GM23248 (cell line): ENCODE measurements at regions of chr15 and their contacts with region 1.

Region 1: GRCh38 chr15:79896637-79897379 is at the start of gene MTHFS:
- DNase-seq: peak; percentile 87
- H3K4me3 ChIP-seq: peak within 1 kb of the TSS; percentile 71
- H3K27ac ChIP-seq: peak within 1 kb of the TSS; percentile 63
- H3K4me1 ChIP-seq: peaks cover 21% of the 10 kb centered on the region
- H3K27me3 ChIP-seq: no peaks in the 10 kb centered on the region
- total RNA-seq, gene MTHFS: 17.4 and 29.1 TPM in 2 replicates

Region 2: GRCh38 chr15:79978655-79979514 is 82.1 kb after region 1 on chr15:
- in situ Hi-C with region 1: no loop called
- DNase-seq: peak; percentile 93
- H3K4me3 ChIP-seq: no peak overlapping the region
- H3K27ac ChIP-seq: peak overlapping the region; percentile 62
- H3K4me1 ChIP-seq: peaks cover 13% of the 10 kb centered on the region
- H3K27me3 ChIP-seq: no peaks in the 10 kb centered on the region

Region 3: GRCh38 chr15:79989682-79990081 is 92.9 kb after region 1 on chr15:
- in situ Hi-C with region 1: loop called (anchors 10 kb)
- DNase-seq: peak; percentile 59
- H3K4me3 ChIP-seq: no peak overlapping the region
- H3K27ac ChIP-seq: no peak overlapping the region
- H3K4me1 ChIP-seq: peaks cover 8% of the 10 kb centered on the region; the same call in 1 of the 2 replicates
- H3K27me3 ChIP-seq: no peaks in the 10 kb centered on the region